ENCODE measurements at regions of chr2 and their contacts with region 1.

Region 1: DNA sequence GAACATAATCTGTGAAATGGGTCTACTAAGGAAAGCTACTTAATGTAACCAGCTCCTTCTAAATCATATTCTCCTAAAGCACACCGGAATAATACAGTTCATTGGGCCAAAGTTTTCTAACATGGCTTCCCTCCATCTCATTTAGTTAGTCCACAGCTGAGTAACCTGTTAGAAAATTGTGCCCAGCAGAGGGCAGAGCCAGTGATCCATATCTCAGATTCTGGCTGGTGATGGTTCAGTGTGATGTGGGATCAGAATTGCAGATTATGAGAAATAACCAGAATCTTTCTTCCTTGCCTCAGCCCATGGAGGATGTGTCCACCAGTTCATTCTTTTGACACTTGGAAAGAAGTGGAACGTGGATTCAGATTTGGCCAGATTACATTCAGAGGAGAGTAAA is 9.4 kb upstream of the CTLA4 start:
- DNase-seq: peak; percentile 65
- H3K4me3 Mint-ChIP-seq: no peak overlapping the region
- H3K27ac Mint-ChIP-seq: peak overlapping the region; percentile 60
- H3K4me1 Mint-ChIP-seq: peaks cover 85% of the 10 kb centered on the region
- H3K27me3 Mint-ChIP-seq: no peaks in the 10 kb centered on the region

Region 2: DNA sequence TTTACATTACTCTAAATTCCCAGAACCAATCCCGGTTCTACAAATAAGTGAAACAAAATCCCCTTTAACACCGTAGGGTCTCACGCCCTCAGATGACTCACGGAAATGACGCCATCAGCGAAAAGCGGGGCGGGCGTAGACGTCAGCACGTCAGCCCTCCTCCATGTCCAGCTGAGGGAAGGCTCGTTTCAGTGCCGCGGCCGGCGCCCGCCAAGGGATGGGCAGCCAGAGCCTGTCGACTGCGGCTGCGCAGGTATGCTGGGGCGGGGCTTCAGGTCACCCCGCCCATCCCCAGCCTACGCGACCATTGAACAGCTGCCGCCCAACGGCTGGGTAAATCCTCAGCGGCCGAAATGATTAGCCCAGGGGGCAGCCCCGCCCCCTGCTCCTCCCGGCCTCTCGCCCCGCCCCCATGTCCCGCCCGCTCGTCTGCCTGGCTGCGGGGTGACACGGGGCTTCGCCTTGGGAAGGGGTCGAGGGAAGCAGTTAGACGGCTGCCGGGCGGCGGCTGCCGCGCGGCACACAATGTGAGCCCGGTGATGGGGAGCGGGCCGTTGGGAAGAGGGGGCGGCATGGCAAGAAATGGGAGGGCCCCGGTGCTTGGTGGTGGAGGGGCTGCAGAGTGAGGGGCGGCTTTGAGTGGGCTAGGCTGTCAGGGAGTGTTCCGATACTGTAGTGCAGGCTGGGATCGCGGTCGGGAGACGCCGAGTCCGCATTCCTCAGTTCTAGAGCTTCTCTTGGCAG is 843.5 kb before region 1 on chr2 and contains the start of gene NBEAL1:
- CTCF ChIA-PET with region 1: no interaction called
- intact Hi-C with region 1: loop called (anchors 10 kb)
- DNase-seq: peak; percentile 97
- H3K4me3 Mint-ChIP-seq: peak within 1 kb of the TSS; percentile 95
- H3K27ac Mint-ChIP-seq: peak within 1 kb of the TSS; percentile 74
- H3K4me1 Mint-ChIP-seq: peaks cover 27% of the 10 kb centered on the region
- H3K27me3 Mint-ChIP-seq: no peaks in the 10 kb centered on the region
- total RNA-seq, gene NBEAL1: 7.9 to 8.3 TPM

Region 3: DNA sequence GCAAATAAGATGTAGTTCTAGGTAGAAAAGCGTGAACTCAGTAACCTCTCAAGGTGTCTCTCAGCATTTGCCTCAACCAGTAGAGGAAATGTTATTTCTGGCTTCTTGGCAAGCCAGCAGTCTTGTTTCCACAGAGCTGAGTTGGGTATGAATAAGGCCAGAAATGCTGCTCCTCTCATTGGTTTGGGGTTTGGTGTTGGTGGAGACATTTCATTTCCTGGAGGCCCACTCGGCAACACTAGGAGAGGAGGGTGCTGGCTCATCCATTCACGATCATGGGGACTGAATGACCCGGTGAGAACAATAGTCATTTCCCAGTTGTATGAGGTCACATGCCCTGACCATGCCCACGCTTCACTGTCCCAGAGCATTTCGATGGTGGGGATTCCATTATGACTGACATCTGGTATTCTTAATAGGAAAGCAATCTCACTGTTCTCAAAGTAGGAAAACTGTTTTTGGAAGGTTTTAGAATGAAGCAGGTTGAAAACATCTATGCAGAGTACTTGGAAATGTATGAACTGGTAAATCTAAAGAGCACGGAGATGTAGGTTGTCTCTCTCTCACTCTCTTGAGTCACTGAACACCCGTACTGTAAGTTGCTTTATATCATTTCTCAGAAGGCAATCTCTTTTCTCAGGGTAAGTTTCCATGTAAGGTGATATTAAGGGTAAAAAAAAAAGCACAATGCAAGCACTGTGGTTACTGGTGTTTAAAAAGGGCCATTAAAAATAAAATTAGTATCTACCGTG is 27.7 kb before region 1 on chr2:
- CTCF ChIA-PET with region 1: interaction called, 3 read pairs
- intact Hi-C with region 1: loop called (anchors 1 kb)
- DNase-seq: peak; percentile 74
- H3K4me3 Mint-ChIP-seq: peak overlapping the region; percentile 46
- H3K27ac Mint-ChIP-seq: peak overlapping the region; percentile 94
- H3K4me1 Mint-ChIP-seq: peaks cover 20% of the 10 kb centered on the region
- H3K27me3 Mint-ChIP-seq: no peaks in the 10 kb centered on the region

Region 4: DNA sequence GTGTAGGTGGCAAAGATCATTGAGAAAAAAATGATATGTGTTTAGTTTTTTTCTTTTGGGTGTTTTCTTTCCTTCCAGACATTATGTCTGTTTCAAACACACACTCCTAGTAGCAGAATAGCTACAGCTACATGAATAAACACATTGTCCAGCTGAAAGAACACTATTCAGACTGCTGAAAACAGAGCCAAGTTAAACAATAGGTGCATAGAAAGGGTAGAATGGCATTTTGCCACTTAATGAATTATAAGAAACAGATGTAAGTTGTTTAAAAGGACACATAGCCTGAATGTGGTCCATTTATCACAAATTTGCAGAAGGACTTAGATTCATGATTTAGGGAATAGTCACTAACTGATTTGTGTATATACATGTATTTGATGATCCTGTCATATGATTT is 29.5 kb after region 1 on chr2:
- CTCF ChIA-PET with region 1: interaction called, 4 read pairs
- intact Hi-C with region 1: loop called (anchors 1 kb)
- DNase-seq: no peak
- H3K4me3 Mint-ChIP-seq: no peak overlapping the region
- H3K27ac Mint-ChIP-seq: no peak overlapping the region
- H3K4me1 Mint-ChIP-seq: peaks cover 54% of the 10 kb centered on the region
- H3K27me3 Mint-ChIP-seq: no peaks in the 10 kb centered on the region

Region 5: DNA sequence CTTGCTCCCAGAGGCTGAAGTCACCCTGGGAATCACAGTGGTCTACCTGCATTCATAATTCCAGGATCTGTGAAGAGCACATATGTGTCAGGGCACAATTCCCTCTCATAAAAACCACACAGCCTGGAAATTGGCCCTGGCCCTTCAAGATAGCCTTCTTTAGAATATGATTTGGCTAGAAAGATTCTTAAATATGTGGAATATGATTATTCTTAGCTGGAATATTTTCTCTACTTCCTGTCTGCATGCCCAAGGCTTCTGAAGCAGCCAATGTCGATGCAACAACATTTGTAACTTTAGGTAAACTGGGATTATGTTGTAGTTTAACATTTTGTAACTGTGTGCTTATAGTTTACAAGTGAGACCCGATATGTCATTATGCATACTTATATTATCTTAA is 102.6 kb after region 1 on chr2:
- CTCF ChIA-PET with region 1: no interaction called
- intact Hi-C with region 1: no loop called
- DNase-seq: no peak
- H3K4me3 Mint-ChIP-seq: no peak overlapping the region
- H3K27ac Mint-ChIP-seq: no peak overlapping the region
- H3K4me1 Mint-ChIP-seq: peaks cover 39% of the 10 kb centered on the region
- H3K27me3 Mint-ChIP-seq: no peaks in the 10 kb centered on the region

Region 6: GRCh38 chr2:204401114-204401513 is 542.9 kb after region 1 on chr2:
- CTCF ChIA-PET with region 1: no interaction called
- intact Hi-C with region 1: no loop called
- DNase-seq: no peak
- H3K4me3 Mint-ChIP-seq: no peak overlapping the region
- H3K27ac Mint-ChIP-seq: no peak overlapping the region
- H3K4me1 Mint-ChIP-seq: no peaks in the 10 kb centered on the region
- H3K27me3 Mint-ChIP-seq: peaks cover 4% of the 10 kb centered on the region

Measured in activated naive CD4-positive, alpha-beta T cell treated with anti-CD3 and anti-CD28 coated beads for 36 hours (primary cell).